ENCODE measurements at regions of chr4 and their contacts with region 1.

Region 1: DNA sequence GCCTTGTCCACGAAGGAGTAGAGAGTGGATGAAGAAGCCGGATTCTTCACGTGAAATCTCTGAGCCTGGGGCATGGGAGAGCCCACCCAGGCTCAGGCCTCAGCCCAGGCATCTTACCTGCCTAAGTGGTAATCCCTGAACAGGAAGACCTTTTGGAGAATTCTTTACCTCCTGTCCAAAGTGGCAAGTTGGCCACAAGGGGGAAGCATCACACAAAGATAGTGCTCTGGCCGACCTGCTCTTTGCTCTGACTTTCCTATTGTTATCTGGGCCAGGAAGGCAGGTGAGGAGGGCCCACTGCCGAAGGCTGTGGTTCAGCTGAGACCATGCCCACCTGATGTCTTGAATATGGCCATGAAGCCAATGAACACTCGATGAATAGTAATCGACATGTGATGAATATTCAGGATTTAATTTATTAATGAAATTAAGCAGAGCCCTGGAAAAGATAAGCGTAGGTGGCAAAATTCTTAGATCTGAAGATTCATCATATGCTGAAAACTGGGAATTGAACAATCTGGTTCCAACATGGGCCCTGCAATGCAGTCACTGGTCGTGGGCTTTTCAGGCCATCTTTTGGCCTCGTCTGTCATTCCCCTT is 93.8 kb downstream of the PDGFRA start:
- DNase-seq: peak; percentile 68
- ATAC-seq: peak; percentile 98
- H3K4me3 ChIP-seq: no peak overlapping the region
- H3K27ac ChIP-seq: no peak overlapping the region
- H3K4me1 ChIP-seq: no peaks in the 10 kb centered on the region
- H3K27me3 ChIP-seq: 0 out of 5 replicates have a peak, but pooled peaks cover 0 to under 1% of the 10 kb centered on the region in 2 experiments
- CTCF ChIP-seq: peak; percentile 86
- EP300 ChIP-seq: no peak
- POLR2A ChIP-seq: no peak
- RAD21 ChIP-seq: peak; percentile 65

Region 2: DNA sequence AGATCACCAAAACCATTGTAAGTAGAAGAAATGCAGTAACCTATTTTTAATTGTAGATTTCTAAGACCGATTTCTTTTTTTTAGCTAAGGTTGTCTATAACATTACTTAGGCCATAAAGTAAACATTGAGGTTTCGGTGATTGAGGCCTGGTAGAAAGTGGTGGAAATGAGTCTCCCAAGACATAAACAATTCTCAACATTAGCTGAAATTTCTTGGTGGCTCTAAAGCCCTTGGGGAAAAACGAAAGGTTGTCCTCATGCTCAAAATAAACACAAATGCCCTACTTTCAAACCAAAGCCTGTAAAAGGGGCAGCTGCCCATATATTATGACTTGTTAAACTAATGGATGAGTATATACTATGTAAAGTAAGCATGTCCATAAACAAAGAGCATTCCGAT is 1055.9 kb before region 1 on chr4:
- CTCF ChIA-PET with region 1: no interaction called
- POLR2A ChIA-PET with region 1: no interaction called
- in situ Hi-C with region 1: no loop called
- intact Hi-C with region 1: no loop called
- DNase-seq: no peak
- ATAC-seq: no peak
- H3K4me3 ChIP-seq: no peak overlapping the region
- H3K27ac ChIP-seq: no peak overlapping the region
- H3K4me1 ChIP-seq: no peaks in the 10 kb centered on the region
- H3K27me3 ChIP-seq: no peaks in the 10 kb centered on the region
- CTCF ChIP-seq: no peak
- EP300 ChIP-seq: no peak
- POLR2A ChIP-seq: no peak
- RAD21 ChIP-seq: no peak

Region 3: DNA sequence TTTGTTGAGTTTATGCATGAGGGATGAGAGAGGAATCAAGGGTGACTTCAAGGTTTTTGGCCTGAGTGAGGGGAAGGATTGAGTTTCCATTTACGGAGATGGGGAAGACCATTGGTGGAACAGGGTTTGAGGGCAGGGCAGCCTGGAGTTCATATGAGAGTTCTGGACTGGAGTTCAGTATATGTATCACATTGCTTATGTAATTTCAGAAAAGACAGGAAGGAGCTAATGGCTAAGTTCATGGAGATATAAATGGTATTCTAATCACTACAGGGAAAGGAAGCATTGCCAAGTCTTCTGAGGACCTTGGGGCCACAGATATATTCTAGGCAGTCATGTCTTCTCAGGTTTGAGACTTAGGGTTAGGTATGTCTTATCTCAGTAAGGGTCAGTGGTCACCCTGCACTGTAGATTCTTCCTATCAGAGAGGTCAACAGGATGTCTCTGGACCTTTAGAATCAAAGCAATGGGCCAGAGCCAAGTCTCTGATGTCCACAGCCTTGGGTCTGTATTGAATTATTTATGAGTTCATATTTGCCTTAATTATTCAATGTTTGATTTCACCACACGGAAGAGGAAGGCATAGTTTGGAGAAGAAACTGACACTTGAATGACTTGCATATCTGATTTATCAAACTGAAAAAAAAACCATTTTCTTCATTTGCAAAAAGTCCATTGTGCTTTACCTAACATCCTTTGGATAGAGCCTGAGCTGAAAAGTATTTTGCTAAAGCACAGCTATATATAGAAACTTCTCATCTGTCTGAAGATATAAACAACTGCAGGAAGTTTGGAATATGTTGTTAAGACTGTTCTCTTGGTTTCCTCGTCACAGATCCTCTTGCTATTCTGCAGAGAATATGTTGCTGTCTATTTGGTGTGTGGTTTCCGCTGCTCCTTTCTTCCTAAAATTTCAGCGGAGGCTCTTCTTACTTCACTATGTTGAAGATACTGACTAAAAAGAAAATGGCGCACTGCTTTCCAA is 45.7 kb after region 1 on chr4:
- CTCF ChIA-PET with region 1: no interaction called
- POLR2A ChIA-PET with region 1: no interaction called
- in situ Hi-C with region 1: no loop called
- intact Hi-C with region 1: no loop called
- DNase-seq: no peak
- ATAC-seq: no peak
- H3K4me3 ChIP-seq: no peak overlapping the region
- H3K27ac ChIP-seq: no peak overlapping the region
- H3K4me1 ChIP-seq: no peaks in the 10 kb centered on the region
- H3K27me3 ChIP-seq: no peaks in the 10 kb centered on the region
- CTCF ChIP-seq: no peak
- EP300 ChIP-seq: no peak
- POLR2A ChIP-seq: no peak
- RAD21 ChIP-seq: no peak

Region 4: GRCh38 chr4:54440394-54441136 is 117.6 kb after region 1 on chr4:
- CTCF ChIA-PET with region 1: interaction called, 9 read pairs
- POLR2A ChIA-PET with region 1: no interaction called
- in situ Hi-C with region 1: loop called (anchors 5 kb)
- intact Hi-C with region 1: loop called (anchors 1 kb)
- DNase-seq: no peak
- ATAC-seq: no peak
- H3K4me3 ChIP-seq: no peak overlapping the region
- H3K27ac ChIP-seq: no peak overlapping the region
- H3K4me1 ChIP-seq: no peaks in the 10 kb centered on the region
- H3K27me3 ChIP-seq: no peaks in the 10 kb centered on the region; a peak in 1 of 5 replicates
- CTCF ChIP-seq: peak; percentile 33
- EP300 ChIP-seq: no peak
- POLR2A ChIP-seq: no peak
- RAD21 ChIP-seq: no peak

Region 5: DNA sequence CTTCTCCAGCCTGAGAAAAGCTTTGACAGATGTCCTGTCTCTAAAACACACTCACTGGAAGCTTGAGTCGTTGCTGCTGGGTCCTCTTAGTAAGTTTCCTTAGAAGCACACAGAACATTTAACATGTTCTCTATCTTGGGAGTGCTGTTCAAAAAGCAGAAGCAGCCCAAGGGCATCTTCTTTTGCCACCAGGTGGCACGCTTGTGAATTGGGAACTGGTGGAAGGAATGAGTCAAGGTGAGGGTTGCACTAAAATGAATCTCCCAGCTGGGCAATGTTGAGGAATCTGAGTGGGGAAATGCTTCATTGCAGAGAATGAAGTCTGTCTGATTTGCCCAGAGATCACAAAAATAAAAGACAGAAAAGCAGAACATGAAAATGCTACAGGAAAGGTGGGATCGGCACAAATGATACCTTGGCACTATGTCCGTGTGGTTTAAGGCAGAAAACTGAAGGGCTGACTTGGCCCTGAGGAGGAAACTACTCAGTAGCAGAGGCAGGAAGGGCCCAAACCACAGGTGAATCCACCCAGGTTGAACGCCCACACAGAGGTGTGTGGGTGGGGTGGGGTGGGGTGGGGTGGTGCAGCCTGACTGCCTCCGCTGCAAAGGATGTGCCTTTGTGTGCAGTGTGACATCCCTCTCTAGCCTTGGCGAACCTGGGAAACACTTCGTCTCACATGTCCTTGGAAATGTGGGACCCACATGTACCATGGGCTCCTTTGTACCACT is 360.9 kb after region 1 on chr4:
- CTCF ChIA-PET with region 1: no interaction called
- POLR2A ChIA-PET with region 1: no interaction called
- in situ Hi-C with region 1: no loop called
- intact Hi-C with region 1: loop called (anchors 5 kb)
- DNase-seq: peak; percentile 13
- ATAC-seq: peak; percentile 73
- H3K4me3 ChIP-seq: no peak overlapping the region
- H3K27ac ChIP-seq: no peak overlapping the region
- H3K4me1 ChIP-seq: no peaks in the 10 kb centered on the region
- H3K27me3 ChIP-seq: no peaks in the 10 kb centered on the region
- CTCF ChIP-seq: peak; percentile 41
- EP300 ChIP-seq: no peak
- POLR2A ChIP-seq: no peak
- RAD21 ChIP-seq: no peak

Region 6: GRCh38 chr4:54971474-54971950 is 648.6 kb after region 1 on chr4:
- CTCF ChIA-PET with region 1: no interaction called
- POLR2A ChIA-PET with region 1: no interaction called
- in situ Hi-C with region 1: loop called (anchors 25 kb)
- intact Hi-C with region 1: no loop called
- DNase-seq: peak; percentile 18
- ATAC-seq: peak; percentile 93
- H3K4me3 ChIP-seq: no peak overlapping the region
- H3K27ac ChIP-seq: no peak overlapping the region
- H3K4me1 ChIP-seq: no peaks in the 10 kb centered on the region
- H3K27me3 ChIP-seq: no peaks in the 10 kb centered on the region
- CTCF ChIP-seq: peak; percentile 68
- EP300 ChIP-seq: no peak
- POLR2A ChIP-seq: no peak
- RAD21 ChIP-seq: 0 out of 2 replicates have a peak, but pooled peaks have one; percentile 26

Measured in HepG2 (cell line).